K562 (cell line): ENCODE measurements at regions of chr2 and their contacts with region 1.

Region 1: GRCh38 chr2:43637030-43637803 is at the start of gene PLEKHH2:
- DNase-seq: peak; percentile 91 to 100 (median 100)
- ATAC-seq: peak; percentile 100
- H3K4me3 ChIP-seq: peak within 1 kb of the TSS; percentile 78
- H3K27ac ChIP-seq: peak within 1 kb of the TSS; percentile 34; the same call in 2 of the 3 replicates
- H3K4me1 ChIP-seq: peaks cover 9 to 14% of the 10 kb centered on the region in 2 experiments; a peak in 4 of 5 replicates
- H3K27me3 ChIP-seq: no peaks in the 10 kb centered on the region; a peak in 1 of 5 replicates
- CTCF ChIP-seq: no peak
- EP300 ChIP-seq: no peak
- POLR2A ChIP-seq: peak; percentile 49
- RAD21 ChIP-seq: no peak
- polyA plus RNA-seq, gene PLEKHH2: 0.77 to 0.86 TPM

Region 2: DNA sequence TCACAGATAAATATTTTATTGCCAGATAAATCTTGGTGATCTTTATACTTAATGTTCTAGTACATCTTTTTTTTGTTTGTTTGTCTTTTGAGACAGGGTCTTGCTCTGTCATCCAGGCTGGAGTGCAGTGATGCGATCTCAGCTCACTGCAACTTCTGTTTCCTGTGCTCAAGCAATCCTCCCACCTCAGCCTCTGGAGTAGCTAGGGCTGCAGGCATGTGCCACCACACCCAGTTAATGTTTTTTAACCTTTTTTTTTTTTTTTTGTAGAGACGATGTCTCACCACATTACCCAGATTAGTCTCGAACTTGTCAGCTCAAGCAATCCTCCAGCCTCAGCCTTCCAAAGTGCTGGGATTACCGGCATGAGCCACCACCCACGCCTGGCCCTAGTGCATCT is 48.1 kb after region 1 on chr2:
- CTCF ChIA-PET with region 1: no interaction called
- POLR2A ChIA-PET with region 1: interaction called, 3 read pairs
- in situ Hi-C with region 1: loop called (anchors 5 kb)
- intact Hi-C with region 1: no loop called
- DNase-seq: peak in 1 of 4 experiments; percentile 13
- ATAC-seq: peak; percentile 86
- H3K4me3 ChIP-seq: no peak overlapping the region
- H3K27ac ChIP-seq: no peak overlapping the region
- H3K4me1 ChIP-seq: peaks cover 0 to 3% of the 10 kb centered on the region in 2 experiments; a peak in 1 of 5 replicates
- H3K27me3 ChIP-seq: no peaks in the 10 kb centered on the region
- CTCF ChIP-seq: no peak
- EP300 ChIP-seq: no peak
- POLR2A ChIP-seq: no peak
- RAD21 ChIP-seq: no peak

Region 3: GRCh38 chr2:43773876-43774613 is 136.8 kb after region 1 on chr2 and contains the start of gene DYNC2LI1:
- CTCF ChIA-PET with region 1: no interaction called
- POLR2A ChIA-PET with region 1: no interaction called
- in situ Hi-C with region 1: no loop called
- intact Hi-C with region 1: loop called (anchors 10 kb)
- DNase-seq: peak; percentile 86 to 94 (median 88)
- ATAC-seq: peak; percentile 99
- H3K4me3 ChIP-seq: peak within 1 kb of the TSS; percentile 61
- H3K27ac ChIP-seq: peak within 1 kb of the TSS; percentile 67
- H3K4me1 ChIP-seq: peaks cover 0 to 2% of the 10 kb centered on the region in 2 experiments; a peak in 2 of 5 replicates
- H3K27me3 ChIP-seq: no peaks in the 10 kb centered on the region
- CTCF ChIP-seq: no peak
- EP300 ChIP-seq: no peak
- POLR2A ChIP-seq: peak; percentile 79
- RAD21 ChIP-seq: no peak
- polyA plus RNA-seq, gene DYNC2LI1: 37.5 to 40.0 TPM